ENCODE measurements at regions of chr12 and their contacts with region 1.

Region 1: GRCh38 chr12:111993292-111994150 is 19.4 kb downstream of the TMEM116 start:
- DNase-seq: no peak
- H3K4me3 Mint-ChIP-seq: peak overlapping the region; percentile 79
- H3K27ac Mint-ChIP-seq: peak overlapping the region; percentile 96
- H3K4me1 Mint-ChIP-seq: peaks cover 61% of the 10 kb centered on the region
- H3K27me3 Mint-ChIP-seq: peaks cover 3% of the 10 kb centered on the region

Region 2: GRCh38 chr12:111904446-111904975 is 89.0 kb before region 1 on chr12:
- CTCF ChIA-PET with region 1: no interaction called
- POLR2A ChIA-PET with region 1: no interaction called
- DNase-seq: no peak
- H3K4me3 Mint-ChIP-seq: no peak overlapping the region
- H3K27ac Mint-ChIP-seq: no peak overlapping the region
- H3K4me1 Mint-ChIP-seq: peaks cover 2% of the 10 kb centered on the region
- H3K27me3 Mint-ChIP-seq: no peaks in the 10 kb centered on the region

Region 3: DNA sequence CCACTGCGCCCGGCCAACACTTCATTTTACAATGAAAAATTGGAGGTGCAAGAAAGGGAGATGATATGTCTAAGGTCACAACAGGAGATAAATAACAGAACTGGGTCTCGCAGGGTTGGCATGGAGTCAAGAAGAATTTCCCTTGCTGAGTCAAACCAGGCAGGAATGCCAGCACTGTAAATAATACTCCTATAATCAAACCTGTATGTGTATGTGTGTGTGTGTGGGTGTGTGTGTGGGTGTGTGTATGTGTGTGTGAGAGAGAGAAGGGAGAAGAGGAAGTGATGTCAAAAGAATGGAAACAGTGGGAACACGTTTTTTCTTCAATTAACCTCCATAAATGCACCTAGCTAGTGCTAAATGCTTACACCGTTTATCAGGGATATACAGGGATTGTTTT is 51.0 kb before region 1 on chr12:
- CTCF ChIA-PET with region 1: interaction called, 11 read pairs
- POLR2A ChIA-PET with region 1: interaction called, 7 read pairs
- DNase-seq: no peak
- H3K4me3 Mint-ChIP-seq: no peak overlapping the region
- H3K27ac Mint-ChIP-seq: no peak overlapping the region
- H3K4me1 Mint-ChIP-seq: peaks cover 18% of the 10 kb centered on the region
- H3K27me3 Mint-ChIP-seq: no peaks in the 10 kb centered on the region

Region 4: GRCh38 chr12:112005419-112006395 is 12.2 kb after region 1 on chr12:
- CTCF ChIA-PET with region 1: interaction called, 4 read pairs
- POLR2A ChIA-PET with region 1: interaction called, 42 read pairs
- DNase-seq: no peak
- H3K4me3 Mint-ChIP-seq: no peak overlapping the region
- H3K27ac Mint-ChIP-seq: no peak overlapping the region
- H3K4me1 Mint-ChIP-seq: peaks cover 52% of the 10 kb centered on the region
- H3K27me3 Mint-ChIP-seq: no peaks in the 10 kb centered on the region

Region 5: GRCh38 chr12:112025808-112026375 is 32.4 kb after region 1 on chr12:
- CTCF ChIA-PET with region 1: no interaction called
- POLR2A ChIA-PET with region 1: interaction called, 12 read pairs
- DNase-seq: no peak
- H3K4me3 Mint-ChIP-seq: no peak overlapping the region
- H3K27ac Mint-ChIP-seq: peak overlapping the region; percentile 72
- H3K4me1 Mint-ChIP-seq: peaks cover 20% of the 10 kb centered on the region
- H3K27me3 Mint-ChIP-seq: no peaks in the 10 kb centered on the region

Region 6: GRCh38 chr12:112125250-112125999 is 131.9 kb after region 1 on chr12 and contains the start of gene TRAFD1:
- CTCF ChIA-PET with region 1: no interaction called
- POLR2A ChIA-PET with region 1: interaction called, 18 read pairs
- DNase-seq: peak; percentile 99
- H3K4me3 Mint-ChIP-seq: peak within 1 kb of the TSS; percentile 89
- H3K27ac Mint-ChIP-seq: peak within 1 kb of the TSS; percentile 81
- H3K4me1 Mint-ChIP-seq: peaks cover 41% of the 10 kb centered on the region
- H3K27me3 Mint-ChIP-seq: peaks cover 3% of the 10 kb centered on the region
- total RNA-seq, gene TRAFD1: 74.8 to 75.5 TPM

Region 7: GRCh38 chr12:112130441-112130998 is 137.0 kb after region 1 on chr12:
- CTCF ChIA-PET with region 1: no interaction called
- POLR2A ChIA-PET with region 1: interaction called, 18 read pairs
- DNase-seq: no peak
- H3K4me3 Mint-ChIP-seq: peak overlapping the region; percentile 70
- H3K27ac Mint-ChIP-seq: peak overlapping the region; percentile 89
- H3K4me1 Mint-ChIP-seq: peaks cover 56% of the 10 kb centered on the region
- H3K27me3 Mint-ChIP-seq: no peaks in the 10 kb centered on the region

Measured in activated CD4-positive, alpha-beta memory T cell treated with anti-CD3 and anti-CD28 coated beads, Interleukin-2, amount 10 ng/mL, durations not matched to agents 7 days and 5 days (primary cell).